Right ventricle myocardium inferior (tissue), 1 donor: ENCODE measurements at regions of chr6 and their contacts with region 1.

Region 1: GRCh38 chr6:105675715-105676397 is 273.0 kb upstream of the PREP start:
- DNase-seq: no peak
- ATAC-seq: no peak

Region 2: GRCh38 chr6:105109955-105110895 is 565.6 kb before region 1 on chr6:
- intact Hi-C with region 1: no loop called
- DNase-seq: no peak
- ATAC-seq: no peak

Region 3: DNA sequence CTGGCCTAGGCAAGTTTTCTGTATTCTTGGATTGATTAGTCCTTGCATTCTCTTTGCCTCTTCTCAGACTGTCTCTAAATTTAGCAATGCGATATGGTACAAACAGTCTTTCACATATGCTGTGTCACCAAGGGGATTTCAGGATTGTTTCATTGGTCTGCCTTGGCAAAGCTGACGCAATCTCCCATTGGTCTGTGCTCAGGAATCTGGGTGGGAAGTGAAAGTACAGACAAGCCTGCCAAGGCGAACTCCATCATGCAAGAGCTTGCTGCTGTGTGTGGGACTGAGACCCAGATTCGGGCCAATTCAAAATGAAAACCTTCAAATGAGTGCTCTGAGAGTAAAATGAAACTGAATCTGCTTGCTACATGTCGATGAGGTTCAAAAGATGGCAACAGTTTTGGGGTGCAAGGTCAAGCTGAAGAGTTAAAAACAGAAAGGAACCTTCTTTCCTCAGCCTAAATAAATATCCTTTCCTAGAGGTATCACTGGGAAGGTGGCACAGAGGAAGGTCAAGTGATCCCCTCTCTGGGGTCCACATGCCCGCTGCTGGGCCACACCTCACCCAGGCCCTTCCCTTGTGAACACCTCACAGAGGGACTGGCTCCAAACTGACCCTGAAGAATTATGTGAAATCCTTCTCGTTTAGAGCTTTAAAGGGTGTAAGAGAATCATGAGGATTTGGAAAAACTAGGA is 74.2 kb before region 1 on chr6:
- intact Hi-C with region 1: loop called (anchors 5 kb)
- DNase-seq: peak; percentile 77
- ATAC-seq: peak; percentile 98